Prostate gland (tissue), 2 donors: ENCODE measurements at regions of chr11 and their contacts with region 1.

Region 1: DNA sequence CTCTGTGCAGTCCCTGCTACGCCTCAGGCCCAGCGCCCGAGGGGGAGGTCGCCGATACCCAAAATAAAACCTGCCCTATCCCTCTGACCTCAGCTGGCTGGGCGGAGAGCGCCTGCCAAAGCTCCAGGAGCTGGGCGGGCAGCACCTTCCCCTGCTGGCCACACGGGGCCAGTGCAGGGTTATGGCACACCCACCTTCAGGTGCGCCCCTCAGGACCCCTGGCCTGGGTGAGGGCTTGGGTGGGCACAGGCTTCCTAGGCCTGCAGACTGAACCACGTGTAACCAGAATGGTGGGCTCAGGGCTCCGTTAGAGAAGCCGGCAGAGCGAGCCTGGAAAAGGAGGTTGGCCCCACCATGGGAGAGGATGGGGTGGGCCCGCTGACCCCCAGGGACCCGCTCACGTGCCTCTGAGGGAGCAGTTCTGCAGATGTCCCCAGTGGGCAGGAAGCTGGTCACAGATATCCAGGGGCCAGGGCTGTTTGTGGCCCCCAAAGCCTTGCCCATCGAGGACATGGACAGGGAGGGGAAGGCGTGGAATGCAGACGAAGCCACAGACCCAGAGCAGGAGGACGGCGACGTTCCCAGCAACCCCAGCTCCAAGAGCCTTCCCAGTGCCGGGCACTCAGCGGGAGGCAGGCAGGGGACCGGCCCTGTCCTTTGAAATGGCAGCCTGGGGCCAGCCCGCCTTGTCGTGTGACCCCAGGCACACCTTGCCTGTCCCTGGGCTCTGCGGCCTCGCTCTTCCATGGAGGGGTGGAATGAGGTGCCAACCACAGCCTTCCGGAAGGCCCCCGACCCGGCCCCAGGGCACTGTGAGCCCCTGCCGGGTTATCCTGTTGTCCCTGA is 1.6 kb upstream of the TNNT3 start:
- DNase-seq: no peak
- H3K4me3 ChIP-seq: no peak overlapping the region
- H3K27ac ChIP-seq: no peak overlapping the region
- H3K4me1 ChIP-seq: no peaks in the 10 kb centered on the region
- H3K27me3 ChIP-seq: no peaks in the 10 kb centered on the region
- CTCF ChIP-seq: peak in 1 of 4 experiments; percentile 5
- POLR2A ChIP-seq: no peak

Region 2: GRCh38 chr11:1694064-1694845 is 223.6 kb before region 1 on chr11:
- intact Hi-C with region 1: loop called (anchors 10 kb)
- DNase-seq: peak; percentile 72
- H3K4me3 ChIP-seq: peak overlapping the region in 1 of 2 donors; percentile 26
- H3K27ac ChIP-seq: no peak overlapping the region
- H3K4me1 ChIP-seq: peaks cover 7% of the 10 kb centered on the region
- H3K27me3 ChIP-seq: no peaks in the 10 kb centered on the region
- CTCF ChIP-seq: peak; percentile 87 to 96 (median 92)
- POLR2A ChIP-seq: no peak

Region 3: DNA sequence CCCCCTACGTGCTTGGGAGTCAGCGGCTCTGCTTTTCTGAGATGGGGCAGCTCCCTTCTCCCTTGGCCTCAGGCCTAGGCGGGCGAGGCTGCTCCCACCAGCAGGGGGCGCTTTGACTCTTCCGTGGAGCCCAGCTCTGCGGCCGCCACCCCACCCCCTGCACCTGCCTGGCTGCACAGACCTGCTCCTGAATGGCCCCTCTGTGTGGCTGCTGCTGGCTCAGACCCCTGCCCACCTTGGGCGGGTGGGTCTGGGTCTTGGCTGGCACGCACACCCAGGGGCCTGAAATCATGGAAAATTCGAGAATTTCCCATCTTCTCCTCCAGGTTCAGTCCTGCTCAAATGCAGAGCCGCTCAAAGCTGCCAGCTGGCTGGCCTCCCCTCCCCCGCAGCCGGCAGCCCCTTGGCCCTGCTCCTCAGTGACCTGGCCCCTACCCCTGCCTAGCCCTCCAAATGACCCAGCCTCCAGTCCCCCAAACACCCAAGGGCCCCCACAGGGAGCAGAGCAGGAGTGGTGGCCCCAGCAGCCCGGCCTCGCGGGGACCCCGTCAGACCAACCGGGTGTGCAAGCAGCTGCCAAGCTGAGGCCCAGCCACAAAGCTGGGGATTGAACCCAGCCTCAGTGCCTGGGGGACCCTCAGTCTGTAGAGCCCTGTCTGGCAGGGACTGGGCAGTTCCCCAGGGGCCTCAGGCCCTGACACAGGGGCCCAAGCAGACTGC is 35.2 kb before region 1 on chr11:
- intact Hi-C with region 1: loop called (anchors 5 kb)
- DNase-seq: peak; percentile 63
- H3K4me3 ChIP-seq: no peak overlapping the region
- H3K27ac ChIP-seq: no peak overlapping the region
- H3K4me1 ChIP-seq: no peaks in the 10 kb centered on the region
- H3K27me3 ChIP-seq: no peaks in the 10 kb centered on the region
- CTCF ChIP-seq: peak; percentile 77 to 92 (median 89)
- POLR2A ChIP-seq: no peak

Region 4: DNA sequence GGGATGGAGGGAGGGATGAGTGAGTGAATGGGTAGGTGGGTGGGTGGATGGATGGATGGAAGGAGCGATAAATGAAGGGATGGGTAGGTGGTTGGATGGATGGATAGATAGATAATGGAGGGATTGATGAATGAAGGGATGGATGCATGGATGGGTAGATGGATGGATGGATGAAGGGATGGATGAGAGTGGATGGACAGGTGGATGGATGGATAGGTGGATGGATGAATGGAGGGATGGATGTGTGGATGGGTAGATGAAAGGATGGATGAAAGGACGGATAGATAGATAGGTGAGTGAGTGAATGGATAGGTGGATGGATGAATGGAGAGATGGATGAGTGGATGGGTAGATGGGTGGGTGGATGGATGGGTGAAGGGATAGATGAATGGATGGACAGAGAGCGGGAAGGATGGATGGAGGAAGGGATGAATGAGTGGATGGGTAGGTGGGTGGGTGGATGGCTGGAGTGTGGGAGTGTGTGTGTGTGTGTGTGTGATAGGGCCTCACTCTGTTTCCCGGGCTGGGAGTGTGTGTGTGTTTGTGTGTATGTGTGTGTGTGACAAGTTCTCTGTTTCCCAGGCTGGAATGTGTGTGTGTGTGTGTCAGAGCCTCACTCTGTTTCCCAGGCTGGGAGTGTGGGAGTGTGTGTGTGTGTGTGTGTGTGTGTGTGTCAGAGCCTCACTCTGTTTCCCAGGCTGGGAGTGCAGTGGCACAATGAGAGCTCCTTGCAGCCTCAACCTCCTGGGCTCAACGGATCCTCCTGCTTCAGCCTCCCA is 24.1 kb before region 1 on chr11:
- intact Hi-C with region 1: loop called (anchors 1 kb)
- DNase-seq: no peak
- H3K4me3 ChIP-seq: no peak overlapping the region
- H3K27ac ChIP-seq: no peak overlapping the region
- H3K4me1 ChIP-seq: no peaks in the 10 kb centered on the region
- H3K27me3 ChIP-seq: no peaks in the 10 kb centered on the region
- CTCF ChIP-seq: no peak
- POLR2A ChIP-seq: no peak